ENCODE measurements at regions of chr17 and their contacts with region 1.

Region 1: DNA sequence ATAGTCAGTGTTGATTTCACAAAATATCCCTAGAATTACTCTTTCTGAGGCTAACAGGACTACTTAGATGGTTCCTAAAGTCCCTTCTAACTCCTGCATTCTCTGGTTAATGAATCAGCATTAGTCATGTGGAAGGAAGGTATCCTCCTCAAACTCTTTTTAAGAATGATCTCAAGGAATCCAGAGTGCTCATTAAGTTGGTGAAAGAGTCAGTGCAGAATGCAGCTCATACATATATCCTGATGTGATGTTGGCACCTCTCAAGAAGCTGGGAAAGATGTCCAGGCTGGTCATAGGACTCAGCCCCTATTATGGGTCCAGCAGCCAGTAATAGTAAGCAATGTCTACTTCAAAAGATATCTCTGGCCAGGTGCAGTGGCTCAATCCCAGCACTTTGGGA is 65.5 kb downstream of the PIGL start:
- DNase-seq: no peak
- ATAC-seq: no peak
- H3K4me3 ChIP-seq: no peak overlapping the region
- H3K27ac ChIP-seq: no peak overlapping the region
- H3K4me1 ChIP-seq: peaks cover 0 to 31% (median 22%) of the 10 kb centered on the region in 12 donors
- H3K27me3 ChIP-seq: no peaks in the 10 kb centered on the region
- CTCF ChIP-seq: no peak
- POLR2A ChIP-seq: no peak

Region 2: GRCh38 chr17:16215273-16215964 is 67.1 kb before region 1 on chr17 and contains the start of gene NCOR1:
- intact Hi-C with region 1: loop called in 1 of 10 experiments (anchors 5 kb)
- DNase-seq: peak; percentile 94 to 97 (median 96)
- ATAC-seq: peak; percentile 94 to 97 (median 96)
- H3K4me3 ChIP-seq: peak within 1 kb of the TSS; percentile 75 to 99 (median 95)
- H3K27ac ChIP-seq: peak within 1 kb of the TSS; percentile 91 to 98 (median 97)
- H3K4me1 ChIP-seq: peaks cover 3 to 62% (median 39%) of the 10 kb centered on the region in 12 donors
- H3K27me3 ChIP-seq: no peaks in the 10 kb centered on the region
- CTCF ChIP-seq: peak in 11 of 12 donors; percentile 15 to 66 (median 37)
- POLR2A ChIP-seq: peak; percentile 34 to 71
- total RNA-seq, gene NCOR1: 58.8 to 92.2 (median 75.3) TPM

Measured in heart left ventricle (tissue), 16 donors.